ENCODE measurements at regions of chr1 and their contacts with region 1.

Region 1: GRCh38 chr1:22275721-22276395 is 133.0 kb upstream of the WNT4 start:
- DNase-seq: peak in 1 of 2 donors; percentile 60
- ATAC-seq: no peak
- H3K4me3 ChIP-seq: no peak overlapping the region
- H3K27ac ChIP-seq: no peak overlapping the region
- H3K4me1 ChIP-seq: no peaks in the 10 kb centered on the region
- H3K27me3 ChIP-seq: no peaks in the 10 kb centered on the region

Region 2: GRCh38 chr1:22105611-22106207 is 170.1 kb before region 1 on chr1:
- intact Hi-C with region 1: loop called (anchors 5 to 10 kb)
- DNase-seq: no peak
- ATAC-seq: peak; percentile 58
- H3K4me3 ChIP-seq: no peak overlapping the region
- H3K27ac ChIP-seq: no peak overlapping the region
- H3K4me1 ChIP-seq: peaks cover 0 to 2% of the 10 kb centered on the region in 2 donors
- H3K27me3 ChIP-seq: no peaks in the 10 kb centered on the region

Region 3: DNA sequence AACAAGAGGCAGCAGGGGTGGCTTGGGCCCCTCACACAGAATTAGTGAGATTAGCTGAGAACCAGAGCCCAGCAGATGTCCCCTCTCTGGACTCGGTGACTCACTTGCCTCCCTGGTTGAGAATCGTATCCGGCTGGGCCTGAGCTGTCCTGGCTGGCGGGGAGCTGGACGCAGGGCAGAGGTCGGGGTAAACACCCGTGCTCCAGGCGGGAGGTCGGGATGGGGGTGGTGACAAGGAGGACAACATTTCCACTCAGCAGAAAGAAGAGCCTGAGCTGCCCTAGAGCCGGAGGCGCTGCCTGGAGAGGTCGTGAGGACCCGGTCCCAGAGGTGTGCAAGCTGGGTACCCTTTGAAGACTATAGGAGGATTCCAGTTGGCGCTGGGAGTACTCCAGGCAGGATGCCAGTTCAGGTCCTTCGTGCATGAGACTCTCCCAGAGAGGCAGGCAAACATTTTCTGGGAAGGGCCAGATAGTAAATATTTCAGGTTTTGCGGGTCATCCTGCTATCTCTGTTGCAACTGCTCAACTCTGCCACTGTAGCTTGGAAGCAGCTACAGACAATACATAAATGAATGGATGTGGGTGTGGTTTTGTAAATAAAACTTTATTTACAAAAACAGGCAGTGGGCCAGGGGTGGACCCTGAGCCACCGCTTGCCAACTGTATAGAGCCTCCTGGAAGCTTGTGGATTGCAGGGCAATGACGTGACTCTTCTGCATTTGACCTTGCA is 16.1 kb before region 1 on chr1:
- intact Hi-C with region 1: no loop called
- DNase-seq: no peak
- ATAC-seq: no peak
- H3K4me3 ChIP-seq: no peak overlapping the region
- H3K27ac ChIP-seq: no peak overlapping the region
- H3K4me1 ChIP-seq: no peaks in the 10 kb centered on the region
- H3K27me3 ChIP-seq: no peaks in the 10 kb centered on the region

Region 4: DNA sequence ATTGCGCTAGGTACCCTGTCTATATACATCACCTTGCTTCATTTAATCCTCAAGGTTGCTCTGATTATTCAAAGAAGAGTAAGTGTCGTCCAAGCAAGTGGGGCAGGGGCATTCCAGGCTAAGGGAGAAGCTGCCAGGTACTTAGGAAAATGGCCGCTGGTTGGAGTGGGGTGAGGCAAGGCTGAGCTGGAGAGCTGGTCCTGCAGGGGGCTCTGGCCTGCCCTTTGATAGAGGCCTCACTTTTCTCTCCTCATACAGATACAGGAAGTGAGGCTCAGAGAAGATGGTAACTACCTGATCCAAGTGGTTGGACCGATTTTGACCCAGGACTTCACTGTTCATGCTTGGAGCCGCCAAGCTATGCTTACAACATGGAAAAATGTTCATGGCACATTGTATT is 88.9 kb after region 1 on chr1:
- intact Hi-C with region 1: no loop called
- DNase-seq: no peak
- ATAC-seq: no peak
- H3K4me3 ChIP-seq: no peak overlapping the region
- H3K27ac ChIP-seq: no peak overlapping the region
- H3K4me1 ChIP-seq: no peaks in the 10 kb centered on the region
- H3K27me3 ChIP-seq: no peaks in the 10 kb centered on the region

Measured in aorta (tissue), 5 donors.